ENCODE measurements at regions of chr10 and their contacts with region 1.

Region 1: DNA sequence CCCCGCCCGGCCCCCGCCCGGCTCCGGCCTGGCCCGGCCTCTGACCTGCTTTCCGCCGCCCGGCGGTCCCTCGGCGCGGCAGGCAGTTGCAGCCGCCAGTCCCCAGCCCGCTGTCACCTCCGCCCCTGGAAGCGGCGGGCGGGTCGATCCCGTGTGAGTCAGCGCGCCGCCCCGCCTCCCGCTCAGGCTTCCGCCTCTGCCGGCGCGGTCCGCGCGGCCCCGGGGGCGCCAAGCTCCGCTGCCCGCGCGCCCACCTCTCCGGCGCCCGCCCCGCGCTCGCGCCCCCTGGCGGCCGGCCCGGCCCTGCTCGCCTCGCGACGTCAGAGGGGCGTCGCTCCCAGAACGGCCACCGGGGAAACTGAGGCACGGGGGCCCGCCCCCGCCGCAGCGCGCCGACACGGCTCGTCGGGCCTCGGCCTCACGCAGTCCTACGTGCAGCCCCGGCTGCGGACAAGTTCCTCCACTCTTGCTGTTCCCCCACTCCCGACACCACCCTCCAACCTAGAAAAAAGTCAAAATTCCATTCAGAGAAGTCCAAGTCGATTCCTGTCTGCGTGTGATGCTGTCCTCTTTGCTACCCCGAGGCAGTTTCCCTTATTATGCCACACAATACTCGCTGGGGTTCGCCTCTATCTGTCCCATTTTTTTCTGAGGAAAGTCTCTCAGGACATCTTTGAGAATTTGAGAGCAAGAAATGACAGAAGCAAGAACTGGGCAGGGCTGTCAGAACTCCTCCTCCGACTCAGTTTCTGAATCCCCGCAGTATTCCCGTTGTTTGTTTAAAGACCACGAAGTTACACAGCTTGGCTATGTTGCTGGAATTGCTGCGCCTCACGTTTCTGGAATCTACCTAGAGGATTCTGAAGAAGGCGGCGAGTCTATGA is at the start of gene DNMBP:
- DNase-seq: peak; percentile 83
- H3K4me3 Mint-ChIP-seq: peak within 1 kb of the TSS; percentile 83
- H3K27ac Mint-ChIP-seq: no peak within 1 kb of the TSS
- H3K4me1 Mint-ChIP-seq: peaks cover 49% of the 10 kb centered on the region
- H3K27me3 Mint-ChIP-seq: peaks cover 25% of the 10 kb centered on the region
- total RNA-seq, gene DNMBP: 4.8 to 5.1 TPM

Region 2: DNA sequence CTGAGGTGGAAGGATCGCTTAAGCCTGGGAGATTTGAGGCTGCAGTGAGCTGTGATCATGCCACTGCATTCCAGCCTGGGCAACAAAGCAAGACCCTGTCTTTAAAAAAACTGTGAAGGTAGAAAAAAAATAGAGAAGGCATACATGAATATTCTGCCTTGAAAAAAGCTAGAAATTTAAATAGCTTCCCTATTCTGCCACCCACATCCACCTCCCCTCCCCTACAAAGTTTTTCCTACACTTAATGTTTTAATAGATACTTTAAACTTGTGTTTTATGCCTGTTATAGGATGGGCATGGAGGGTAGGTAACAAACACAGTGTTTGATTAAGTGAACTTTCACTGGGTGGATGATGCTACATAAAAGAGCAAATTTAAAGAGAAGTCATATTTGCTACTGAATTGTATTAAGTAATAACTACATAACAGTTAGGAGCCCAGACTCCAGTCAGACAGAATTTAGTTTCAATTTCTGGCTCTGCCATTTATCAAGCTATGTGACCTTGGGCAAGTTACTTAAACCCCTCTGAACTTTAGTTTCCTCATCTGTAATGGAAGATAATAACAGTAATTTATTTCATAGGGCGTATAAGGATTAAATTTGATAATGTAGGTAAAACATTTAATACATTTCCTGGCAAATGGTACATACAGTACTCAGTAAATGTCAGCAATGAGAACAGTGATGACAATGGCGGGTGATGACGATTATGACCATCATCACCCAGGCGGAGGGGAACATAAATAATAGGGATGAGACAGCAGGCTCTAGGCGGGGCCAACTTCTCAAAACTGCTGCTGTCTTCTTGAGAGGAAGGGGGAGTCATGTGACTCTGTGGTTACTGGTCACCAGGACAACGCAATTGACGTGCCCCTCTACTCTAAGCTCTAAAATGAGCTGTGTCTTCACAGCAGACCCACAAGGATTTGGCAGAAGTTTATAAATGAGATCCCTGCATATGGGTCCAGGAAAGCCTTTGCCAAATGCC is 16.0 kb before region 1 on chr10:
- CTCF ChIA-PET with region 1: interaction called, 13 read pairs
- POLR2A ChIA-PET with region 1: interaction called, 7 read pairs
- DNase-seq: peak; percentile 70
- H3K4me3 Mint-ChIP-seq: no peak overlapping the region
- H3K27ac Mint-ChIP-seq: no peak overlapping the region
- H3K4me1 Mint-ChIP-seq: peaks cover 20% of the 10 kb centered on the region
- H3K27me3 Mint-ChIP-seq: no peaks in the 10 kb centered on the region

Region 3: GRCh38 chr10:100020142-100020885 is 10.3 kb after region 1 on chr10:
- CTCF ChIA-PET with region 1: interaction called, 11 read pairs
- POLR2A ChIA-PET with region 1: interaction called, 3 read pairs
- DNase-seq: peak; percentile 22
- H3K4me3 Mint-ChIP-seq: no peak overlapping the region
- H3K27ac Mint-ChIP-seq: no peak overlapping the region
- H3K4me1 Mint-ChIP-seq: peaks cover 7% of the 10 kb centered on the region
- H3K27me3 Mint-ChIP-seq: peaks cover 23% of the 10 kb centered on the region